ENCODE measurements at regions of chr6 and their contacts with region 1.

Region 1: DNA sequence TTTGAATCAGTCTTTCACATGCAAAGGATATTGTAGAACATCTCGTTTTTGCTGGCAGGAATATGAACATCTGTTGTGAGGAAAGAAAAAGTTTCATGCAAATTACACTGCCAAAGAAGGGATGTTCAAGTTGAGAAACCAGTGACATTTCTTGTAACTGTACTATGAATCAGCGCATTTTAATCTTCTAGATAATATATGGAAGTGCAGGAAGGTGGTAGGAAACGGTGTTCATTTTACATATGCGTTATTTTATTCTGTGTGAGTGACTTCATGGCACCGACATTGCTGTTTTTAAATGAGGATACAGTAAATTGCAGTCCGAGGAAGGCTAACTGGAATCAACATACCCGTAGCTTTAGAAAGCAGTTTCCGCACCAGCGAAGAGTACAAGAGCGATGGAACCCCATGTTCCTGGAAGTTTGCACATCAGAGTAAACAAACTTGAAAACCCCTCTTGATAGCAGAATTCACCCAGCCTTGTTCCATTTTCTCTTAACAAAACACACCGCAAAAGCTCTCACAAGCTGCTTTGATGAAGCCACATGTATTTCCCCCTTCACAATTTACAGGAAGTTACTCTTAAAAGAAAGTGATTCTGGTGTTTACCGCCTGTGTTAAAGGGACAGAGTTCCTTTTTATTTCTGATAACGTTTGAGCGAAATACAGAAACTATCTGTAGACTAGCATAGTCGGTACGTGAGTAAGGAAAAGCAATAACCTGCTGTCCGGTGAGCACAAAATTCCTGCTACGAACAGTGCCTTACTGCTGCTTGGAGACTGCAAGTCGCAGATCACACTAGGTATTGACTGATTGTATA is 11.5 kb downstream of the PRDM1 start:
- DNase-seq: peak; percentile 92
- H3K4me3 Mint-ChIP-seq: peak overlapping the region; percentile 91
- H3K27ac Mint-ChIP-seq: peak overlapping the region; percentile 97
- H3K4me1 Mint-ChIP-seq: peaks cover 75% of the 10 kb centered on the region
- H3K27me3 Mint-ChIP-seq: no peaks in the 10 kb centered on the region

Region 2: DNA sequence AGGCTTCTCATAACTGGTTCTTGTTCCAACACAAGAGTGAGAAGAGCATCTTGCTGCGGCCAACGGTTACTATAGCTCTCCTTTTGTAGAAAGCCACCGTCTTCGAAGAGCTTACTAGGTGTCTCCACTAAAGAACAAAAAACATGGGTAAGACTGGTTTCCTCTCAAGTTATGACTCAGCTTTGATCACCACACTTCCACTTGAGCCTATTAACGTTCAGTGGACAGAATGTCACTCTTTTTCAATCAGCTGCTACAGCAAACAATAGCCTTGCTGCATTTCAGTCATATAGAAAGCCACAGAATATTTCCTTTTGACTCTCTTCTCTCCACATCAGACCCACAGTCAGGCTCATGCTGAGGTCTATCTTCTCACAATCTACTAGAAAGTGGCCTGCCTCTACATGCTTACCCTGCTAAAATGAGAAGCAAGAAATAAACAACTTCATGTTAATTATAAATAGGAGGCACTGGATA is 451.2 kb before region 1 on chr6:
- intact Hi-C with region 1: loop called (anchors 1 kb)
- DNase-seq: peak; percentile 88
- H3K4me3 Mint-ChIP-seq: peak overlapping the region; percentile 39
- H3K27ac Mint-ChIP-seq: peak overlapping the region; percentile 90
- H3K4me1 Mint-ChIP-seq: peaks cover 70% of the 10 kb centered on the region
- H3K27me3 Mint-ChIP-seq: no peaks in the 10 kb centered on the region

Region 3: DNA sequence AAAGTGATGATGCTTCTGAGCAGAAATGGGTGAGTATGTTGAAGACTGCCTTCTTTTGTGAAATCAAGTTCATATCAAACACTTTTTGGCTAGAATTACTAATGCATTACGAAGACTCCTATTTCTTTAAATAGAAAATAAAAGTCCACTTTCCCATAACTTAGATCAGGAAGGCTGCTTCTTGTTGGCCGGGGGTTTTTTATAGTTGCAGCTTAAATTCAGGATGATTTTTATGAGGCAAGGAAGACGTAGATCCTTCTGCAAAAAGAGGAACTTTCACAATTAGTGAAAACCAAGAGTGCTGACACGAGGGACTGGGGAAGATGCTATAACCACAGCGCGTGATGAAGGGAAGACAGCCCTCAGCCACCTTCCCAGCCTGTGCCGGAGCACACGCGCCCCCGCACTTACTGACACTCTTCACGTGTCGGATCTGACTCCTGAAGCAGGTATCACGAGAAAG is 217.6 kb before region 1 on chr6:
- intact Hi-C with region 1: loop called (anchors 5 kb)
- DNase-seq: peak; percentile 70
- H3K4me3 Mint-ChIP-seq: peak overlapping the region; percentile 70
- H3K27ac Mint-ChIP-seq: peak overlapping the region; percentile 25
- H3K4me1 Mint-ChIP-seq: peaks cover 39% of the 10 kb centered on the region
- H3K27me3 Mint-ChIP-seq: peaks cover 3% of the 10 kb centered on the region

Region 4: GRCh38 chr6:106085984-106086813 is 11.4 kb before region 1 on chr6 and contains the start of gene PRDM1:
- intact Hi-C with region 1: loop called (anchors 1 kb)
- DNase-seq: peak; percentile 95
- H3K4me3 Mint-ChIP-seq: peak within 1 kb of the TSS; percentile 93
- H3K27ac Mint-ChIP-seq: peak within 1 kb of the TSS; percentile 87
- H3K4me1 Mint-ChIP-seq: peaks cover 72% of the 10 kb centered on the region
- H3K27me3 Mint-ChIP-seq: peaks cover 10% of the 10 kb centered on the region
- total RNA-seq, gene PRDM1: 35.9 and 37.4 TPM in 2 replicates

Region 5: DNA sequence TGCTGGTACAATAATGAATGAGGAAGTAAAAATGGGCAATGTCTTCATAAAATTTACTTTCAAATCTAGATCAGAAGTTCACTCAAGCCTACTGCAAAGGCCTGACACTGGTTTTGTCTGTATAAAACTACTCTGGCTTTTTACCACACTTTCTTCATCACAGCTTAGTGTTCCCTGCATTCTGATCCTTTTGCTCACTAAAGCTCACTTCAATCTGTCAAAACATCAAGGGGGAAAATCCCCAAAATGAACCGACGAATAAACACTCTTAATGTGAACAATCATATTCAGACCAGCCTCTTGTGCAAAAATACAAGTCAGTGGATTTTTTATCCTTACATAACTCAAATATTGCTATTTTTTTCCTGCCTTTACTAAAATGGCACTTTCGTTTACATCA is 87.0 kb after region 1 on chr6:
- intact Hi-C with region 1: loop called (anchors 1 kb)
- DNase-seq: peak; percentile 49
- H3K4me3 Mint-ChIP-seq: no peak overlapping the region
- H3K27ac Mint-ChIP-seq: no peak overlapping the region
- H3K4me1 Mint-ChIP-seq: peaks cover 47% of the 10 kb centered on the region
- H3K27me3 Mint-ChIP-seq: no peaks in the 10 kb centered on the region

Region 6: DNA sequence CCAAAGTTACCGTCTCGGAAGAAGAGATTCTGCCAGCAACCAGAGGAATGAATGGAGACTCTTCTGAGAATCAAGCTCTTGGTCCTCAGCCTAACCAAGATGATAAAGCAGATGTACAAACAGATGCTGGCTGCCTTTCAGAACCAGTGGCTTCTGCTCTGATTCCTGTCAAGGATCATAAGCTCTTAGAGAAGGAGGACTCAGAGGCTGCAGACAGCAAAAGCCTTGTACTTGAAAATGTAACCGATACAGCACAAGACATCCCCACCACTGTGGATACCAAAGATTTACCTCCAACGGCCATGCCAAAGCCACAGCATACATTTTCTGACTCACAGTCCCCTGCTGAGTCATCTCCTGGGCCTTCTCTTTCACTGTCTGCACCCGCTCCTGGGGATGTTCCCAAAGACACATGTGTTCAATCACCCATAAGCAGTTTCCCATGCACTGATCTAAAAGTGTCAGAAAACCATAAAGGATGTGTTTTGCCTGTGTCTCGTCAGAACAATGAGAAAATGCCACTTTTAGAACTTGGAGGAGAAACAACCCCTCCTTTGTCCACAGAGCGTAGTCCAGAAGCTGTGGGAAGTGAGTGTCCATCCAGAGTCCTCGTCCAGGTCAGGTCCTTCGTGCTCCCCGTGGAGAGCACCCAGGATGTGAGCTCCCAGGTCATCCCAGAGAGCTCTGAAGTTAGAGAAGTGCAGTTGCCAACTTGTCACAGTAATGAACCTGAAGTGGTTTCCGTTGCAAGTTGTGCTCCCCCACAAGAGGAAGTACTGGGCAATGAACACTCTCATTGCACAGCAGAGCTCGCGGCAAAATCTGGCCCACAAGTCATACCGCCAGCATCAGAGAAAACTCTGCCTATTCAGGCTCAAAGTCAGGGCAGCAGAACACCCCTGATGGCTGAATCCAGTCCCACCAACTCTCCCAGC is 422.1 kb after region 1 on chr6:
- intact Hi-C with region 1: loop called (anchors 1 kb)
- DNase-seq: peak; percentile 92
- H3K4me3 Mint-ChIP-seq: peak overlapping the region; percentile 80
- H3K27ac Mint-ChIP-seq: peak overlapping the region; percentile 97
- H3K4me1 Mint-ChIP-seq: peaks cover 59% of the 10 kb centered on the region
- H3K27me3 Mint-ChIP-seq: no peaks in the 10 kb centered on the region

Region 7: DNA sequence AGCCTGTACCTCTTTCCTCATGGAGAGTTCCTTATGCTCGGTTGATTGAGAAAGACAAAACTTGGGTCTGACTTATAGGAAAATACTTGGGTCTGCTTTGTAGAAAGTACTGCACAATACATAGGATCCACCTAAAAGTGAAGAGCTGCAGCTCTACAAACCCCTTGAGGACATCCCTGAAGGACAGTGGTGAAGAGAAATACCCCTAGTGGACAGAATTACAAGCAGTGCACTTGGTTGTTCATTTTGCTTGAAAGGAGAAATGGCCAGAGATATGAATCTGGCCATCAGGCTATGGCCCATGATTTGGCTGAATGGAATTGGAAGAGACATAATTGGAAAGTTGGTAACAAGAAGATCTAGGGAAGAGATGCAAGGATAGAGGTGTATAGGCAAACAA is 868.6 kb after region 1 on chr6:
- intact Hi-C with region 1: no loop called
- DNase-seq: no peak
- H3K4me3 Mint-ChIP-seq: no peak overlapping the region
- H3K27ac Mint-ChIP-seq: no peak overlapping the region
- H3K4me1 Mint-ChIP-seq: no peaks in the 10 kb centered on the region
- H3K27me3 Mint-ChIP-seq: peaks cover 24% of the 10 kb centered on the region

Measured in activated CD4-positive, alpha-beta T cell treated with anti-CD3 and anti-CD28 coated beads, Interleukin-2, amount 10 ng/mL, durations not matched to agents 24 days and 14 days (primary cell).